Activated T-helper 1 cell treated with anti-CD3 and anti-CD28 coated beads, Interleukin-12 subunit alpha, Interleukin-12 subunit beta, Interleukin-2, Interleukin-4 antibody, amounts not matched to agents 30 ng/mL and 10 ng/mL and 1 ng/mL, durations not matched to agents 14 hours and 24 hours and 36 hours (primary cell): ENCODE measurements at regions of chr3 and their contacts with region 1.

Region 1: GRCh38 chr3:67113802-67114407 is 115.8 kb downstream of the KBTBD8 start:
- DNase-seq: peak; percentile 65
- H3K4me3 Mint-ChIP-seq: no peak overlapping the region
- H3K27ac Mint-ChIP-seq: no peak overlapping the region
- H3K4me1 Mint-ChIP-seq: peaks cover 7% of the 10 kb centered on the region
- H3K27me3 Mint-ChIP-seq: no peaks in the 10 kb centered on the region

Region 2: DNA sequence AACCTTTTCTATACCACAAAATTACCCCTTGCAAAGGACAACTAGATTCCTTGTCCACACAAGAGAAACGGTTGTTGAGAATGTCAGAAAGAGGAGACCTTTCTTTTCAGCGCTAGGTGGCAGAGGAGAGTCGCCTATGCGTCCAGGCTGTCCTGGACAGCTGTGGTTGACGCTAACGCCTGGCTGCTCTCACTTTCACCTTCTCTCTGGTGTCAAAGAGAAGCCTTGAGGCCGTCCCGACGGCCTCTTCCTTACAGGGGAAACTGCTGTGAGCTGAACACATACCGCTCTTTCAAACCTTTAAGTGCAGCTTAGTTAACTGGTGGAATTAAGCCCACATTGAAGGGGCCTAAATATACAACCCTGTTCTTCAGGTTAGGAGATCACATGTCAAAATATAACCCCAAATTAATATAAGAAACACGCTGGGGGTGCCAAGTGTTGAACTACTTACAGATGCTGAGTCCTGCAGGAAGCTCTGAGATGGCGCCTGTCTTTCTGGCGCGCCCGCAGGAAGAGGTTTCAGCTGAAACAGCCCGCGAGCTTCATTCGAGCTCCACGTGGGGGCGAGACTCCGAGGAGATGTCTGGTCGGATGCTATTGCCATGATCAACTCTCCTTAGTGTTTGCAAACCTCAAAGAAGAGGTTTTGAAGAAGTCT is 141.9 kb before region 1 on chr3:
- intact Hi-C with region 1: loop called (anchors 1 kb)
- DNase-seq: peak; percentile 46
- H3K4me3 Mint-ChIP-seq: peak overlapping the region; percentile 68
- H3K27ac Mint-ChIP-seq: no peak overlapping the region
- H3K4me1 Mint-ChIP-seq: peaks cover 13% of the 10 kb centered on the region
- H3K27me3 Mint-ChIP-seq: peaks cover 24% of the 10 kb centered on the region

Region 3: DNA sequence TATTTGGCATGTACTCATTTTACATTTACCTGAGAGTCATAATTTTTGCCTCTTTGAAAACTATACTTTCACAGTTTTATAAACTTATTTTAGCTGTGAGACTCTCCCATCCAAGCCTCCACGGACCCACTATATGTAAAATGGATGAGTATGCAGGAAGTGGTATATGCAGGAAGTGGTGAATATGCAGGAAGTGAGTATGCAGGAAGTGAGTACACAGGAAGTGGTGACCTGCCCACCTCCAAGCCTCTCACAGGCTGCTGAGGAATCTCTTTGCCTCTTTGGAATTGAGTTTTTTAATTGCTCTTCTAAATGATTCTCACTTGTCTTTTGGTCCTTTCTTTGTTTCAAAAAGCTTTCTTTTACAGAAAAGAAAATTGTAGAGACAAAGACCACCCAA is 30.6 kb before region 1 on chr3:
- intact Hi-C with region 1: loop called (anchors 1 kb)
- DNase-seq: peak; percentile 32
- H3K4me3 Mint-ChIP-seq: peak overlapping the region; percentile 52
- H3K27ac Mint-ChIP-seq: peak overlapping the region; percentile 76
- H3K4me1 Mint-ChIP-seq: peaks cover 16% of the 10 kb centered on the region
- H3K27me3 Mint-ChIP-seq: no peaks in the 10 kb centered on the region

Region 4: GRCh38 chr3:67154429-67154828 is 40.5 kb after region 1 on chr3:
- intact Hi-C with region 1: no loop called
- DNase-seq: no peak
- H3K4me3 Mint-ChIP-seq: no peak overlapping the region
- H3K27ac Mint-ChIP-seq: no peak overlapping the region
- H3K4me1 Mint-ChIP-seq: no peaks in the 10 kb centered on the region
- H3K27me3 Mint-ChIP-seq: peaks cover 2% of the 10 kb centered on the region

Region 5: DNA sequence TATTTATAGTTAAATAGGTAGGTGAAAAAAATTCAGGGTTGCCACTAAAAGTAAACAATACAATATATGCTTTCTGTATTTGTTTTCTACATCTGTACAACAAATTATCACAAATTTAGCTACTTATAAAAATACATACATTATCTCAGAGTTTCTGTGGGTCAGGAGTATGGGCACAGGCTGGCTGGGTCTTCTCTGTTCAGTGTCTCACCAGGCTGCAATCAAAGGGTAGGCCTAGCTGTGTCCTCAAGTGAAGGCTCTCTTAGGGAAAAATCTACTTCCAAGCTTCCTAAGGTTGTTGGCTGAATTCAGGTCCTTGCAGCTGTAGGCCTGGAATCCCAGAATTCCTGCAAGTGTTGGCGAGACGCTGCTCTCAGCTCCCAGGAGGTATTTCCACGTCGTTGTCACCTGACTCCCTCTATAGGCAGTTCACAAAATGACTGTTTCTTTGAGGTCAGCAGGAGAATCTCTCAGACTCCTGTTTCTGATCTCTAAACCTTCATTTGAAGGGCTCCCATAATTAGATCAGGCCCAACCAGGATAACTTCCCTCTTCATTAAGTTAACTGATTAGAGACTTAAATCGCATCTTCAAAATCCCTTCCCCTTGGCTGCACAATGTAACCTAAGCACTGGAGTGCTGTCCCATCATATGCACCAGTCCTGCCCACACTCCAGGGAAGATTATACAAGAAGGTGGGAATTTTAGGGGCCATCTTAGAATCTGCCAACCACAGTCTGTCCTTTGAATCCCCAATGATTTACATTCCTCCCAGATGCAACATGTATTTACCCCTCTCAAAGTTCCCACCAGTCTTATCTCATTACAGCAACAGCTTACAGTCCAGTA is 243.9 kb after region 1 on chr3:
- intact Hi-C with region 1: loop called (anchors 2 kb)
- DNase-seq: no peak
- H3K4me3 Mint-ChIP-seq: no peak overlapping the region
- H3K27ac Mint-ChIP-seq: no peak overlapping the region
- H3K4me1 Mint-ChIP-seq: peaks cover 20% of the 10 kb centered on the region
- H3K27me3 Mint-ChIP-seq: no peaks in the 10 kb centered on the region

Region 6: DNA sequence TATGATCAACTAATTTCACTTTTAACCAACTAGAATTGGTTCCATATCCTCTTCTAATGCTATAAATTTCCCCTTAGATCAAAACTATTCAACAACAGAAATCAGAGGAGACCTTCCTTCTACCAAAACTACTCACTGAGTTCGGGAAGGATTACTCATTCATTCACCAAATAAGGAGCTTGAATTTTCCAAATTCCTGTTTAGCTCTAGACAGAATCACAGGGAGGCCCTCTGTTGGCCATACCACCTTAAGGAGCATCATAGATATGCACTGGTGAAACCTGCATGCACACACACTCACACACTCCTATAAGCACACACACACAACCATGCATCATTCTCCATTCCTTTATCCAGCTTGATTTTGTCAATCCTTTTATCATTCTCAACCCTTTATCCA is 491.5 kb after region 1 on chr3:
- intact Hi-C with region 1: loop called (anchors 10 kb)
- DNase-seq: no peak
- H3K4me3 Mint-ChIP-seq: no peak overlapping the region
- H3K27ac Mint-ChIP-seq: no peak overlapping the region
- H3K4me1 Mint-ChIP-seq: peaks cover 39% of the 10 kb centered on the region
- H3K27me3 Mint-ChIP-seq: no peaks in the 10 kb centered on the region

Region 7: DNA sequence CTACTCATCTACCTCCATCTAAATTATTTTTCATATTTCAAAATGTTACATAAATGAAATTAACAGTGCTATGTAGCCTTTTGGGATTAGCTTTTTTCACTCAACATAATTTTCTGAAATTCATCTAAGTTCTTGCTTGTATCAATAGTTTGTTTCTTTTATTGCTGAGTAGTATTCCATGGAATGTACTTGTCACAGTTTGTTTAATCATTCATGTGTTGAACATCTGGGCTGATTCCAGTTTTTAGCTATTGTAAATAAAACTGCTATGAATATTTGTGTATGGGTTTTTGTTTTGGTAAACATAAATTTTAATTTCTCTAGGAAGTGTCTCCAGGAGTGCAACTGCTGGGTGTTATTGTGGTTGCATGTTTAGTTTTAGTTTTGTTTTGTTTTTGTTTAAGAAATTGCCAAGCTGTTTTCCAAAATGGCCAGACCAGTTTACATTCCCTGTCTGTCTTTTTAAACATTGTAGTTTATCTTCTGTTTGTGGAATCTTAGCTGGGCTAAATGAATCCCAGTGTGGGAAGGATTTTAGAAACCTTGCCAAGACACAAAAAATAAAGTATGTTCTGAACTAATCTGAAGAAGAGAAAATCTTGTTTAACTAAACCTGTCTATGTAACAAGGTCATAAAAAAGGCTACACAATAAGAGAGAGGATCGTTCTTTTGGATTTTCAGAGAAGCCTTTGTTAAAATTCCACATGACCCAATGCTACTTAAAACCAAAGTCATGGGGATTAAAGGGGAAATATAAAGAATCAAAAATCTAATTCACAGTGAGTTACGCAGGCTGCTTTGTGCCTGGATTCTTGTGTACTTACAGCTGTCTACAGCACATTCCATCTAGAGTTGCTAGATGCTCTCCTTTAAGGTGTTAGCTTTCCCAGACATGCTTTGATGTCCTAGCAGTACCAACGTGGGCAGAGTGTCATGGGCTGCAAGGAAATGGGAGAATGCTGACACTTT is 669.7 kb after region 1 on chr3:
- intact Hi-C with region 1: no loop called
- DNase-seq: no peak
- H3K4me3 Mint-ChIP-seq: no peak overlapping the region
- H3K27ac Mint-ChIP-seq: no peak overlapping the region
- H3K4me1 Mint-ChIP-seq: no peaks in the 10 kb centered on the region
- H3K27me3 Mint-ChIP-seq: no peaks in the 10 kb centered on the region

Region 8: GRCh38 chr3:68876112-68876713 is 1762.3 kb after region 1 on chr3:
- intact Hi-C with region 1: loop called (anchors 1 kb)
- DNase-seq: no peak
- H3K4me3 Mint-ChIP-seq: no peak overlapping the region
- H3K27ac Mint-ChIP-seq: no peak overlapping the region
- H3K4me1 Mint-ChIP-seq: no peaks in the 10 kb centered on the region
- H3K27me3 Mint-ChIP-seq: peaks cover 13% of the 10 kb centered on the region